Naive thymus-derived CD4-positive, alpha-beta T cell (primary cell): ENCODE measurements at regions of chr3 and their contacts with region 1.

Region 1: DNA sequence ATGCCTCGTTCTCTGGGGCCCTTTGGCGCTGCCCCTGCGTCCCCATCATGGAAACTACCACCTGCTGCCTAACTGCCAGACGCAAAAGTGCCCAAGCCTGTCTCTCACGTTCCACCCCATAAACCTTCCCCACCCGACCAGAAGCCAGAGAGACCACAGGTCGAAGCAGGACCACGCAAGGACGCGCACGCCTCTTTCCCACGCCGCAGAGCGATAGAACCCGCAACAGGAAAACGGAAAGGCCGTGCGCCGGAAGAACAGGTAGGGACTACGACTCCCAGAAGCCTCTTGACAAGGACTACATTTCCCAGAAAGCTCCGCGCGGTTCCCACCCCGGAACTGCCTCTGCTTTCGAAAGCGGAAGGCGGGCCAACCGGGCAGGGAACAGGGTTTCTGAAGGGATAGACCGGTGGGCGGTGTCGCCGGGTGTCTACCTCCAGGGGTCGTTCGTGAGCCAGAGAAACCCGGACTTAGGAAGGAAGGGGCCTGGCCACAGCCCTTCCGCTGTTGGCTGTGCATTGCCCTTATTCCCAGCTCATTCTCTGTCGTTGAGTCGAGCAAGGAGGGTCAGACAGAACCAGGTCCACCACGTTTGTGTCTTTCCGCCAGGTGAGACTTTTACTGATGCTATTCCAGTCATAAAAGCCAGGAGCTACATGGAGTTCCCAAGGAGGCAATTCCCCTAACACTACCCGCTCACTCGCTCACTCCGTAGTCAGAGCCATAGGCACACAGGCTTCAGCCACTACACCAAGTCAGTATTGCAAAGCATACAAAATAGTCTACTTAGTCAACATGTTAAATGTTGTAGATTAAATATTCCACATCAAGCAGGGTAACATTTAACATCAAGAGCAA is 56.6 kb upstream of the ZBTB38 start:
- DNase-seq: peak; percentile 88 to 98 (median 97)
- ATAC-seq: peak; percentile 97
- H3K4me3 ChIP-seq: peak overlapping the region; percentile 80
- H3K4me3 Mint-ChIP-seq: peak overlapping the region; percentile 89 to 99 (median 97)
- H3K27ac ChIP-seq: peak overlapping the region; percentile 77
- H3K27ac Mint-ChIP-seq: peak overlapping the region; percentile 91 to 99 (median 97)
- H3K4me1 ChIP-seq: peaks cover 31 to 43% of the 10 kb centered on the region in 2 donors
- H3K4me1 Mint-ChIP-seq: peaks cover 38 to 71% (median 61%) of the 10 kb centered on the region in 7 donors
- H3K27me3 ChIP-seq: no peaks in the 10 kb centered on the region
- H3K27me3 Mint-ChIP-seq: no peaks in the 10 kb centered on the region

Region 2: DNA sequence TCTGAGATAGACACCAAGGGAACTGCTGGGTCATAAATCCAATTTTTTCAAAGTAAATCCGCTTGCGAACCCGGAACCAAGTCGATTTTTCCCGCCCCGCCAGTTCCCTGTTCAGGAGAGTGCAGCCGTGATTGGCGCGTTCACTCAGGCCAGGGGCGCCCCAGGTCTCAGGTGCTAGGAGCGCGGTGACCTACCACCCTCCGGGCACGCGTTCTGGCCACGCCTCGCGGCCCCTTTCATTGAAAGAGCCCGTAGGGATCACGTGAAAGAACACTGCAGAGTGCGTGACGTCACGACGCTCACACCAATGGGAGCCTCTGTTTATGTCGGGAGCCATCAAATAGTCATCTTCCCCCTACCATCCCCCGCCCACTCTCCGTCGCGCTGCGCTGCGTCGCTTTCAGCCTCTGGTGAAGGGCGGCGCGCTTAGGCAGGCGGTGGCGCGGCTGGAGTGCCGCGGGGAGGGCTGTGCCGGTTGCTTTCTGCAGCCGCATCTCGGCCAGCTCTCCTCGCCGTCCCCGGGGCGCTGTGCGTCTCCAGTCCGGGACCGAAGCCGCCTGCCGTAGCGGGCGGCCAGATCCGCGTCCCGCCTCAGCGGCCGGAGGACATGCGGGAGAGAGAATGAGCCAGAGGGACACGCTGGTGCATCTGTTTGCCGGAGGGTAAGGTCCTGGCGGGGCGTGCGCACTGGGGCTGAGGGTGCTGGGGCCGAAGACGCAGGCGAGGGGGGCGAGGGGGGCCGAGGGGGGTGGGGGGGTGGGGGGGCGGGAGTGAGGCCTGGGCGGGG is 370.1 kb before region 1 on chr3 and contains the start of gene SLC25A36:
- CTCF ChIA-PET with region 1: no interaction called
- POLR2A ChIA-PET with region 1: no interaction called
- intact Hi-C with region 1: loop called (anchors 1 to 10 kb)
- DNase-seq: peak; percentile 83 to 96 (median 94)
- ATAC-seq: peak; percentile 99
- H3K4me3 ChIP-seq: peak within 1 kb of the TSS; percentile 69
- H3K4me3 Mint-ChIP-seq: peak within 1 kb of the TSS; percentile 90 to 100 (median 96)
- H3K27ac ChIP-seq: peak within 1 kb of the TSS; percentile 89
- H3K27ac Mint-ChIP-seq: peak within 1 kb of the TSS; percentile 94 to 100 (median 99)
- H3K4me1 ChIP-seq: peaks cover 9 to 14% of the 10 kb centered on the region in 2 donors
- H3K4me1 Mint-ChIP-seq: peaks cover 31 to 52% (median 47%) of the 10 kb centered on the region in 7 donors
- H3K27me3 ChIP-seq: no peaks in the 10 kb centered on the region
- H3K27me3 Mint-ChIP-seq: peaks cover 0 to 30% (median 0%) of the 10 kb centered on the region in 5 donors
- total RNA-seq, gene SLC25A36: 43.4 to 121 (median 66.9) TPM

Region 3: GRCh38 chr3:141114816-141115460 is 196.8 kb before region 1 on chr3:
- CTCF ChIA-PET with region 1: no interaction called
- POLR2A ChIA-PET with region 1: no interaction called
- intact Hi-C with region 1: no loop called
- DNase-seq: no peak
- ATAC-seq: no peak
- H3K4me3 ChIP-seq: no peak overlapping the region
- H3K4me3 Mint-ChIP-seq: no peak overlapping the region
- H3K27ac ChIP-seq: no peak overlapping the region
- H3K27ac Mint-ChIP-seq: no peak overlapping the region
- H3K4me1 ChIP-seq: no peaks in the 10 kb centered on the region
- H3K4me1 Mint-ChIP-seq: no peaks in the 10 kb centered on the region
- H3K27me3 ChIP-seq: no peaks in the 10 kb centered on the region
- H3K27me3 Mint-ChIP-seq: peaks cover 0 to 18% (median 0%) of the 10 kb centered on the region in 5 donors

Region 4: DNA sequence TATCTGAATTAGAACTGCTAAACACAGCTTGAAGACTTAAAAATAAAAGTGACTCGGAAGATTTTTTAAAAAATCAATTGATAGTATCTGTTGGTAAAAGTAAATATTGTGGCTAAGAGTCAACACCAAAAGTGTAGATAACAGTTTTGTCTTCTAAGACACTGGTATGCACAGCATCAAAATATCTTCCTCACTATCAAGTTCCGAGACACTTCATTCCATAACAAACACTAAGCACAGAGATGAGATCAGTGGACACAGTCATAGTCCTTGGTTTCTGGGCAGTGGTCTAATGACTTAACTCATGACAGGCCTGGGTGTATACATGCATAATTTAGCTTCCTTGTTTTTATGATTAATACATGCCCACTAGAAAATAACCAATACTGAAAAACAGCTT is 16.9 kb before region 1 on chr3:
- CTCF ChIA-PET with region 1: no interaction called
- POLR2A ChIA-PET with region 1: interaction called, 9 read pairs
- intact Hi-C with region 1: loop called (anchors 2 kb)
- DNase-seq: no peak
- ATAC-seq: peak; percentile 42
- H3K4me3 ChIP-seq: peak overlapping the region; percentile 40
- H3K4me3 Mint-ChIP-seq: peak overlapping the region; percentile 51 to 87 (median 78)
- H3K27ac ChIP-seq: peak overlapping the region; percentile 65
- H3K27ac Mint-ChIP-seq: peak overlapping the region; percentile 70 to 99 (median 91)
- H3K4me1 ChIP-seq: peaks cover 0 to 4% of the 10 kb centered on the region in 2 donors
- H3K4me1 Mint-ChIP-seq: peaks cover 6 to 53% (median 39%) of the 10 kb centered on the region in 7 donors
- H3K27me3 ChIP-seq: no peaks in the 10 kb centered on the region
- H3K27me3 Mint-ChIP-seq: peaks cover 0 to 3% (median 0%) of the 10 kb centered on the region in 5 donors

Region 5: DNA sequence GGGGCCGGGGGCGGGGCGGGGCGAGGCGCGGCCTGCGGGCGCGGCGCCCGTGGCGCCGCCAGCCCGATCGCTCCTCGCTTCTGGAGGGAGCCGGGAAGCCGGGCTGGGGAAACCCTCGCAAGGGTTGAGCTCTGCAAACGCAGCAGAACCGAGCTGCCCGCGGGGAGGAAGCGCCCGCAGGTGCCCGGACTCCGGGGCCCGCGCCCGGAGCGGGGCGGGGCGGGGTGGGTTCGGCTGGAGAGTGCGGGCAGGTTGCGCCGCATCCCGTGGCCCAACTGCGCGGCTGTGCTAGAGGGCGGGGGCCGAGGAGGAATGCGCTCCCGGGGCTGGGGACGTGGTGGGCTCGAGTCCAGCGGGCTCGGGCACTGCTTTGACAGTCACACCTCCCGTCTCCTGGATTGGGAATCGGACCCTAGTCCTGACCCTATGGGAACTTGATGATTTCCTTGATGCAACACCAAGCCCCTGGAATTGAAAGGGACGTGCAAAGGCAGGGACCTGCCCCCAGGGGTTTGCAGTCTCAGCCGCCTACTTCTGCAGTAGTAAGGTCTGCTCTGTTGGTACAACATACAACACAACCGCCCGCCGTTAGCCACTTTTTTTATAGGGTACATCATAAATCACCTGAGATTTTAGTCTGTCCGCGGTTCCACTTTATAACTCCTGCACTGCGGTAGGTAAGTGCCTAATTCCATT is 90.9 kb after region 1 on chr3:
- CTCF ChIA-PET with region 1: no interaction called
- POLR2A ChIA-PET with region 1: interaction called, 5 read pairs
- intact Hi-C with region 1: loop called (anchors 1 kb)
- DNase-seq: peak; percentile 35 to 62 (median 51)
- ATAC-seq: peak; percentile 70
- H3K4me3 ChIP-seq: peak overlapping the region; percentile 80
- H3K4me3 Mint-ChIP-seq: peak overlapping the region; percentile 83 to 96 (median 92)
- H3K27ac ChIP-seq: peak overlapping the region; percentile 94
- H3K27ac Mint-ChIP-seq: peak overlapping the region; percentile 75 to 97 (median 94)
- H3K4me1 ChIP-seq: peaks cover 14 to 48% of the 10 kb centered on the region in 2 donors
- H3K4me1 Mint-ChIP-seq: peaks cover 20 to 69% (median 46%) of the 10 kb centered on the region in 7 donors
- H3K27me3 ChIP-seq: no peaks in the 10 kb centered on the region
- H3K27me3 Mint-ChIP-seq: no peaks in the 10 kb centered on the region

Region 6: GRCh38 chr3:141452036-141452435 is 140.3 kb after region 1 on chr3:
- CTCF ChIA-PET with region 1: interaction called, 161 read pairs
- POLR2A ChIA-PET with region 1: interaction called, 27 read pairs
- intact Hi-C with region 1: loop called (anchors 1 kb)
- DNase-seq: peak in 7 of 9 donors; percentile 45 to 78 (median 64)
- ATAC-seq: peak; percentile 90
- H3K4me3 ChIP-seq: no peak overlapping the region
- H3K4me3 Mint-ChIP-seq: no peak overlapping the region
- H3K27ac ChIP-seq: peak overlapping the region; percentile 10
- H3K27ac Mint-ChIP-seq: no peak overlapping the region
- H3K4me1 ChIP-seq: peaks cover 0 to 10% of the 10 kb centered on the region in 2 donors
- H3K4me1 Mint-ChIP-seq: peaks cover 6 to 20% (median 12%) of the 10 kb centered on the region in 7 donors
- H3K27me3 ChIP-seq: no peaks in the 10 kb centered on the region
- H3K27me3 Mint-ChIP-seq: no peaks in the 10 kb centered on the region

Region 7: GRCh38 chr3:141561426-141562034 is 249.8 kb after region 1 on chr3:
- CTCF ChIA-PET with region 1: interaction called, 3 read pairs
- POLR2A ChIA-PET with region 1: interaction called, 3 read pairs
- intact Hi-C with region 1: loop called in 1 of 2 experiments (anchors 2 kb)
- DNase-seq: peak in 7 of 9 donors; percentile 59 to 78 (median 73)
- ATAC-seq: peak; percentile 80
- H3K4me3 ChIP-seq: no peak overlapping the region
- H3K4me3 Mint-ChIP-seq: peak overlapping the region in 4 of 10 donors; percentile 17 to 54 (median 32)
- H3K27ac ChIP-seq: peak overlapping the region; percentile 25
- H3K27ac Mint-ChIP-seq: peak overlapping the region in 8 of 9 donors; percentile 55 to 89 (median 76)
- H3K4me1 ChIP-seq: peaks cover 0 to 37% of the 10 kb centered on the region in 2 donors
- H3K4me1 Mint-ChIP-seq: peaks cover 11 to 47% (median 24%) of the 10 kb centered on the region in 7 donors
- H3K27me3 ChIP-seq: no peaks in the 10 kb centered on the region
- H3K27me3 Mint-ChIP-seq: no peaks in the 10 kb centered on the region

Region 8: DNA sequence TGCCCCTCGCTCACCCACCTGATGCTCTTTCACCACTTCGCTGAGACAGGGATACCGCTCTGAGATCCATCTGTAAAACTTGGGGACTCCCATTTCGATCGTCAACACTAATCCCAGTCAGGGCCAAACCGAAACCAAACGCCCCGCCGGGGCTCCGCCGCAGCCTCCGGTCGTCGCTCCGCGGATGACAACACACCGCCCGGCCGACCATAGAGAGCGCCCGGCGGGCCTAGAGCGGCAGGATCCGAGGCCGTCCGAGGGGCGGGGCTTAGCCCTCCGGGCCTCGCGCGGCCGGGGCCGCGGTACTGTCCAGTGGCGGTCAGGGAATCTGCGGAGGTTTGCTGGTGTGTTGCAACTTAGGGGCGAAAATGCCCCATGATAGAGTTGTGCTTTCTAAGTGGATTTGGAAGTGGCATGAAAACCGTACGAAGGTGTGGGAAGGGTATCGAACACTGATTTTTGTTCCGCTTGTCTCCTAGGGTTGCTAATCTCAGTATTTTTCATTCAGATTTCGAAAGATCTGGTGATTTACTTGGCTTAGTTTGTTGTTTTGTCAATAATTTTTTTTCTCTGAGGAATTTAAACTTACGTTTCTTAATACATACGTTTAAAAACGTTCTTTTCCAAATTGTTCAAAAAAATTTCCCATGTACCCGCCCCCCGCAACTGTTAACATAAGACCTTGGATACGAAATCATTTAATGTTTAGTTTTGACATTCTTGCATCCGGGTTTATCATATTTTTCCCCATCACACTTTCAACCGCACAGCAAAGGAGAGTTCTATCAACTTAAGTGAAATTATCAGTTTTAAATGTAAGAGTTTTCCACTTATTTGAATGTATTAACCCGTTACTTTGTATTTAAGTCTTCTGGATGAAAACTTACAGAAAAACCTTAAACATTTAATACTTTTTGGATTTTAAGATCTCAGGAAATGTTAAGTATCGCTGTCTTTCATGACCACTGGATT is 1136.4 kb after region 1 on chr3 and contains the start of gene XRN1:
- CTCF ChIA-PET with region 1: no interaction called
- POLR2A ChIA-PET with region 1: no interaction called
- intact Hi-C with region 1: loop called in 1 of 2 experiments (anchors 5 kb)
- DNase-seq: peak; percentile 90 to 97 (median 94)
- ATAC-seq: peak; percentile 99
- H3K4me3 ChIP-seq: peak within 1 kb of the TSS; percentile 78
- H3K4me3 Mint-ChIP-seq: peak within 1 kb of the TSS; percentile 89 to 100 (median 98)
- H3K27ac ChIP-seq: peak within 1 kb of the TSS; percentile 99
- H3K27ac Mint-ChIP-seq: peak within 1 kb of the TSS; percentile 98 to 100 (median 99)
- H3K4me1 ChIP-seq: peaks cover 31% of the 10 kb centered on the region in 2 donors
- H3K4me1 Mint-ChIP-seq: peaks cover 26 to 55% (median 51%) of the 10 kb centered on the region in 7 donors
- H3K27me3 ChIP-seq: no peaks in the 10 kb centered on the region
- H3K27me3 Mint-ChIP-seq: no peaks in the 10 kb centered on the region
- total RNA-seq, gene XRN1: 86.1 to 123 (median 103) TPM